Right ventricle myocardium inferior (tissue), 1 donor: ENCODE measurements at regions of chr15 and their contacts with region 1.

Region 1: GRCh38 chr15:29904757-29905417 is 82.6 kb upstream of the TJP1 start:
- DNase-seq: no peak
- ATAC-seq: no peak

Region 2: GRCh38 chr15:29870495-29871151 is 34.3 kb before region 1 on chr15:
- intact Hi-C with region 1: no loop called
- DNase-seq: no peak
- ATAC-seq: peak; percentile 66

Region 3: DNA sequence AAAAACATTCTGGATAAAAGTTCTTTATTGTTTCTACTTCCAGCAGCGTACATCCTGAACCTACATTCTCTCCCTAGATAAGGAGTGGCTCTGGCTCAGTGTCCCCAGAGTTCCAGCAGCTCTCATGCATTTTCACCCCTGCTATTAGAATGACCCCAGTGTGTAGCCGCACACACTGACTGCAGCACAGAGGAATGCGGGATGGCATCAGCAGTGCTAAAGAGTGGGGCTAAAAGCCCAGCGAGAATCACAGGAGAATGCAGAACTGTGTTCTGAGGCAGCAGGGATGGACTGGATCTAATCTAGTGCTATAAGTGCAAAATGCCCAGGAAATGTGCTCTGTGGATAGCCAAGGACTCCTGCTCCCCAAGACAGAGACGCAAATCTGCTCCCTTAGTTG is 16.2 kb before region 1 on chr15:
- intact Hi-C with region 1: loop called (anchors 2 kb)
- DNase-seq: no peak
- ATAC-seq: peak; percentile 85

Region 4: GRCh38 chr15:29978411-29979382 is 73.8 kb after region 1 on chr15:
- intact Hi-C with region 1: no loop called
- DNase-seq: no peak
- ATAC-seq: no peak